ENCODE measurements at regions of chr11 and their contacts with region 1.

Region 1: DNA sequence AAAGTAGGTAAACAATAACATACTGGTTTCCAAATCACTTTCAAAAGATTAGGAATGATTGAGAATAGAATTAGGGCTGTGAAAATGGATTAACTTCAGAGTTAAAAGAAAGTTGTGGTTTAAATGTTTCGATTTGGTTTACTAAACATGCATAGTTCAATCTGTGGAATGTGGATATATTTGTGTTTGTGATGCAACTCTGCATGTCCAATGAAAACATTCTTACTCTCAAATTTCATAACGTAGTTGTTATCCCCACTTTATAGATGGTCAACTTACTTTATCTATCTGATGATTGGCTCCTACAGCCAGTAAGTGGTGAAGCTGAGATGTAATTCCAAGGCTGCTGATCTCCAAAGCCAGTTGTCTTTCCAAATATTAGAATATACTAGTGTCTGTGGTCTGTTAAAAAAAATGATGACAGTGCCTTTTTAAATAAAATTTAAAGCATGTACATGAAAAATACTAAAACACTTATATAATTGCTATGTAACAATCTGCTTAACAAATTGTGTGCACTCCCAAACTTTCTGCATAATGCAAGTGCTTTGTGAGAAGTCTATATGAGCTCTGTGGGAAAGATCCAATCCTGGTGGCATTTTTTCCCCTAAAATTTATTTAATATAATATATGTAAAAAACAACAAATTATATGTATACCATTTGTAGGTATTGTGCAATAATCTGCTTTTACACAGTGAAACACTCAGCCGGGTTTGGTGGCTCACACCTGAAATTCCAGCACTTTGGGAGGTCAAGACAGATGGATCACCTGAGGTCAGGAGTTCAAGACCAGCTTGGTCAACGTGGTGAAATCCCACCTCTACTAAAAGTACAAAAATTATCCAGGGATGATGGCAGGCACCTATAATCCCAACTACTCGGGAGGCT is 9.7 kb upstream of the SIK3 start:
- DNase-seq: no peak
- H3K4me3 Mint-ChIP-seq: no peak overlapping the region
- H3K27ac Mint-ChIP-seq: no peak overlapping the region
- H3K4me1 Mint-ChIP-seq: no peaks in the 10 kb centered on the region
- H3K27me3 Mint-ChIP-seq: no peaks in the 10 kb centered on the region
- CTCF ChIP-seq: no peak

Region 2: DNA sequence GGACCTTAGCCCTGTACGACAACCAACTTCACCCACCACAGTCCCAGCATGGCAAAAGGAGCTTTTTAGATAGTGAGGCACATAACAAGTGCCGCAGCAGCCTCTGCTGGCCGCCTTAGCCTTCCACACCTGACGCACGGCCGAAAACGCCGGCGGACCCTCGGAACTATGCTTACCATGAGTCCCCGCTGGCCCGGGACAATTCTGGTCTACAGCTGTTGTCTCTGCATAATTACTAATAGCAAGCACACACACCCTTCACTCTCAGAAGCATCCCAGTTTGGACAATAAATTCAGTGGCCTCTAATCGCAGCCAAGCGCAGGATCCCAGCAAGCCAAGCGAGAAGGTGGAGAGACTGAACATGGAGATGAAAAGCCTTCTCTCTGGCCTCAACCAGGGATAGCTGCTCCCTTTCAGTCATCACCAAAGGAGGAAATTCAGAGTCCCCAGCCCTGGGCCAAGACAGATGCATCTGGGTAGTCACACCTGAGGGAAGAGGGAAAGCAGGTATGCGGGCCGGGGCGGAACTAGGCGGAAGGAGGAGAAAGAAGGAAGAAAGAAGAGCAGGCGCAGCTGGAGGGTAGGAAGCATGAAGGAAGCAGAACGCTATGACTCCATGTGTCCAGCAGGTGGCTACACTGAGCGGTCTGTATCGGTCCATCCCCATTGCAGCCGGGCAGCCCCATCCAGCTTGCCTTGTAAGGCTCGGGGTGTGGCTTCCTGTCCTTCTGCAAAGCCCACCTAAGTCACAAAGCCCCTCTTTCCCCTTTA is 375.5 kb before region 1 on chr11:
- CTCF ChIA-PET with region 1: interaction called, 3 read pairs
- intact Hi-C with region 1: loop called (anchors 1 kb)
- DNase-seq: peak; percentile 56
- H3K4me3 Mint-ChIP-seq: no peak overlapping the region
- H3K27ac Mint-ChIP-seq: no peak overlapping the region
- H3K4me1 Mint-ChIP-seq: peaks cover 9% of the 10 kb centered on the region
- H3K27me3 Mint-ChIP-seq: no peaks in the 10 kb centered on the region
- CTCF ChIP-seq: peak; percentile 54

Region 3: GRCh38 chr11:116787786-116788486 is 320.0 kb before region 1 on chr11 and contains the start of gene ZPR1:
- CTCF ChIA-PET with region 1: interaction called, 15 read pairs
- intact Hi-C with region 1: loop called (anchors 5 kb)
- DNase-seq: peak; percentile 80
- H3K4me3 Mint-ChIP-seq: peak within 1 kb of the TSS; percentile 90
- H3K27ac Mint-ChIP-seq: peak within 1 kb of the TSS; percentile 96
- H3K4me1 Mint-ChIP-seq: peaks cover 17% of the 10 kb centered on the region
- H3K27me3 Mint-ChIP-seq: no peaks in the 10 kb centered on the region
- CTCF ChIP-seq: no peak
- total RNA-seq, gene ZPR1: 34.5 and 41.5 TPM in 2 replicates

Region 4: DNA sequence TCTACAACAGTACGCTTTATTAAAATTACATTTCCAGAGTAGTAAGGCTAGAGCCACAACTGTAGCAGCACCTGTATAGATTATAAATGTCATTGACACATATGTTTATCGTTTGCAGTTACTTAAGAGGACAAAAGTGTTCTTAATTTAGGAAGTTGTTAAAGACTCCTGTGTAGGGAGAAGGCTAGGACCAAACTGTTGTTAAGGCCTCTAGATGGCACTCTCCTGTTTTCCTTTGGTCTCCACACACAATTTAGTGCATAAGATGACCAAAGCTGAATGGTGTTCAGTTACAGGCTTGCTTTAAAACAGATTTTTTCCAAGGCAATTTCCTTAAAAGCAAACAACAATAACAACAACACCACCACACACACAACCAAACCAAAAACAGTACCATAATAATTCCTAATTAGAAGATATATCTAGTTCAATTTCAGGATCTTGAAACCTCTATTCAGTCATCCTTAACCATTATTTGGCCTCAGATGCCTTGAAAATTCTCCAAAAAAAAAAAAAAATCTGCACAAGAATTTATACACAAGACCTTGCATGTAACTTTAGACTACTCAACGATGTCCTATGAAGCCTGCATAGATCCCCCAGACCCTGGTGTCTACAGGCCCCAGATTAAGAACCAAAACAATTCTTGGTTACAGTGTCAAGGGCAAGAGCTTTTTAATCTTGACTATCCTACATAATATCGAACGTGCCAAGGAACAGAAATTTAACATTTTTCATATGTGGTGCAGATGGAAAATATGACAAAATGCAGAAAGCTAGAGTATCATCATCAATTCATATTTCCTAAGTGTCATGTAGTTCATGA is 227.9 kb before region 1 on chr11:
- CTCF ChIA-PET with region 1: interaction called, 21 read pairs
- intact Hi-C with region 1: loop called (anchors 1 kb)
- DNase-seq: peak; percentile 23
- H3K4me3 Mint-ChIP-seq: no peak overlapping the region
- H3K27ac Mint-ChIP-seq: no peak overlapping the region
- H3K4me1 Mint-ChIP-seq: no peaks in the 10 kb centered on the region
- H3K27me3 Mint-ChIP-seq: no peaks in the 10 kb centered on the region
- CTCF ChIP-seq: no peak

Measured in Calu3 (cell line).